ENCODE measurements at regions of chr2 and their contacts with region 1.

Region 1: GRCh38 chr2:172931918-172932520 is 143.6 kb upstream of the MAP3K20 start:
- DNase-seq: peak; percentile 70 to 77
- H3K4me3 ChIP-seq: peak overlapping the region in 1 of 2 donors; percentile 16
- H3K27ac ChIP-seq: peak overlapping the region; percentile 12 to 40
- H3K4me1 ChIP-seq: peaks cover 0 to 44% (median 15%) of the 10 kb centered on the region in 4 donors
- H3K27me3 ChIP-seq: no peaks in the 10 kb centered on the region
- CTCF ChIP-seq: peak; percentile 62 to 69

Region 2: GRCh38 chr2:172806493-172806892 is 125.5 kb before region 1 on chr2:
- intact Hi-C with region 1: loop called (anchors 2 kb)
- DNase-seq: no peak
- H3K4me3 ChIP-seq: no peak overlapping the region
- H3K27ac ChIP-seq: no peak overlapping the region
- H3K4me1 ChIP-seq: no peaks in the 10 kb centered on the region
- H3K27me3 ChIP-seq: no peaks in the 10 kb centered on the region
- CTCF ChIP-seq: peak; percentile 75 to 76

Region 3: DNA sequence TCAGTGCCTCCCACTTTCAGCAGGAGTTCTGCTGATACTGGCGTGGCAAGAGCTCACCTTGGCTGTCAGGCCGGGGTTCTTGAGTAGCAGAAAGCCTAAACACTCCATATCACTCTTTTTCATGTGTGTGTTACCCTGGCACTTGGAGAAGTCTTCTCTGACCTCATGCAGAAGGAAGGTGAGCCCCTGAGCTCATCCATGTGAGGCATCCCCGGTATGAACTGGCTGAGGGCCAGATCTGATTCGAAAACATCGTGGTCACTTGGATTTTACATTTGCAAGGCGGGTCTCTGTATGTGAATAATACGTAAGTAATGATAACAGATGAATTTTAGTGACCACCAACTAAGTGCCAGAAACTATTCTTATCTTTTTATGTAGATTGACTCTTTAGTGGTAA is 102.8 kb before region 1 on chr2:
- intact Hi-C with region 1: no loop called
- DNase-seq: no peak
- H3K4me3 ChIP-seq: no peak overlapping the region
- H3K27ac ChIP-seq: no peak overlapping the region
- H3K4me1 ChIP-seq: no peaks in the 10 kb centered on the region
- H3K27me3 ChIP-seq: no peaks in the 10 kb centered on the region
- CTCF ChIP-seq: no peak

Region 4: DNA sequence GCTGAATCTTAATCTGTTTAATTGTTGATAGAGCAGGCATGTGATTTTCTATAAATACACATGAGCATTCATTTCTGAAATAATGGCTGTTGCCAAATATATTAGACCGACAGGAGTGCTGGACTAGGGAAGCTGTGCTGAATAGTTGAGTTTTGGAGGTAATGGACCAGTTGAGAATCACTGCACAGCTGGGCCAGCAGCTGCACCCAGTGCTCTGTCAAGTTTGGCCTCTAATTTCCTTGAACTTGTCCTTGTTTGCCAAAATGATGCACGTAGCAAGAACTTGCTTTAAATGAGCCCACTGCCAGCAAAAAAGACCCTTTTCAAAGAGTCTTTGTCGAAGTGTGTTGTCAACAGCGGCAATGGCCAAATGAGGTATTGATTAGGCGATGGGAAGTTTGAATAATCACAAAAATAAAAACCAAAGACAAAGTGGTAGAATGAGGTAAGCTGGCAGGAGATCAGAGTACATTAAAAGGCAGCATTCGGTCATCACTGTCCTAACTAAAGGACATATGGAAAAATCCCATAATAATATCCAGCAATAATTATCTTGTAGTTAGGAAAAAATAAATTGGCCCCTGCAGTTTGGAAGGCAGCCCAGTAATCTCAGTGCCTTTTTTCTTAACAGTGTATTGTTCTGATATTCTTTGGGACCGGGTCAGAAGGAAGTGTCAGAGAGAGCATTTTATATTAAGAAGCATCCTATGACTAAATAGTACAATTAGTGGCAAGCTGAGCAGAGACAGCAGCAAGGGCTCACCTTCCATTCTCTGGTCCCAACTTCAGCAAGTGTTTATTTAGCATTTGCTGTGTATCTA is 70.2 kb before region 1 on chr2:
- intact Hi-C with region 1: loop called (anchors 2 kb)
- DNase-seq: no peak
- H3K4me3 ChIP-seq: no peak overlapping the region
- H3K27ac ChIP-seq: no peak overlapping the region
- H3K4me1 ChIP-seq: no peaks in the 10 kb centered on the region
- H3K27me3 ChIP-seq: no peaks in the 10 kb centered on the region
- CTCF ChIP-seq: no peak

Region 5: DNA sequence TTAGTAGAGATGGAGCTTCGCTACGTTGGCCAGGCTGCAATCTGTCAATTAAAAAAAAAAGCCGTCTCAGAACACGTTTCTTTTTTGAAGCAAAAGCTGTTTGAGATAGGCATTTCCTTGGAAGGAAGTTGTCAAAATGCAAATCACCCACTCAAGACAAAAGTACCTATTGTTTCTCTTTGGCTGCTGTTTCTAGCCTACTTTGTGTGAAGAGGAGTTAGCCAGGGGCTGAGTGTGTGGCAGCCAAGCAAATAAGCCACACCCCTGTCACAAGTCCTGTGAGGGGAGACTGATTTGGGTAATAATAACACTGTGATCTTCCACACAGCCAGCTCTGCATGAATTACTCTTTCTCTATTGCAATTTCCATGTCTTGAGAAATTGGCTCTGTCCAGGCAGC is 375.3 kb after region 1 on chr2:
- intact Hi-C with region 1: no loop called
- DNase-seq: no peak
- H3K4me3 ChIP-seq: no peak overlapping the region
- H3K27ac ChIP-seq: no peak overlapping the region
- H3K4me1 ChIP-seq: no peaks in the 10 kb centered on the region
- H3K27me3 ChIP-seq: no peaks in the 10 kb centered on the region
- CTCF ChIP-seq: no peak

Measured in tibial artery (tissue), 4 donors.